Ascending aorta (tissue), 2 donors: ENCODE measurements at regions of chr3 and their contacts with region 1.

Region 1: DNA sequence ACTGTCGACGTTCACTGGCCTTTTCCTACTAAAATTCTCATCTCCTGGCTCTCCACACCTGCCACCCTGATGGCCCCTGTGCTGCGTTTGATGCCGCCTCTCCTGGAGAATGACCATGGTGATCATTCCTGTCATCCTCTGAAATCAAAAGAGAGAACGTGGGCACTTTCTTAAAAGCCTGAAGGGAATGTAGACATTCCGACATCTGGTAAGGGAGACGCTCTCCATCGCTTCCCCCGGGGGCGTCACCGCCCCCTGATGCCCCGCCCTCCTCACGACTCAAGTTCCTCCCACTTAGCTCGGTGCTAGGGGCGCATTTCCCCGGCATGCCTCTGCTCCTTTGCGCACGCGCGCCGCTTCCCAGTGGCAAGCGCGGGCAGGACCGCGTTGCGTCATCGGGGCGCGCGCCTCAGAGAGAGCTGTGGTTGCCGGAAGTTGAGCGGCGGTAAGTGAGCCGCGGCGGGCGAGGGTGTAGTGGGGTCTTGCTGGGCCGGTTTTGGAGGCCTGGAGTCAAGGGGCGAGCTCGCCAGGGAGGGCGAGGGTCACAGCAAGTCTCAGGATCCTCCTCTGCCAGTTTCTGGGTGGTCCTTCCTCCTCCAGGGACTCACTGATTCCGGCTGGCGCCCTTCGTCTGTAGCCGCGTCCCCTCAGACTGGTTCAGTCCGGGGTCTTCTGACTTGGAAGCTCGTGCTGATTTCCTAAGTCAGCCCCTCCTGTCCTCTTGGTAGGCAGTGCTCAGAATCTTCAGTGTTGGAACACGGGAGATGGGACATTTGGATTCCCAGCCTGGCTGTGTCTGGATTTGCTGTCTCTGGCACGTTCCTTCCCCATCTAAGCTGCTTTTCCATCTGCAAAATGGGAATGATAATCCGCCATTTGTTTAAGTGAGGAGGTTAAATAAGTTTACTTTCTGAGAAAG is at the start of gene ATG7:
- DNase-seq: peak; percentile 91 to 99
- H3K4me3 ChIP-seq: peak within 1 kb of the TSS; percentile 89 to 91
- H3K27ac ChIP-seq: peak within 1 kb of the TSS; percentile 74 to 85
- H3K4me1 ChIP-seq: peaks cover 8 to 14% of the 10 kb centered on the region in 2 donors
- H3K27me3 ChIP-seq: no peaks in the 10 kb centered on the region
- CTCF ChIP-seq: no peak
- total RNA-seq, gene ATG7: 48.5 TPM

Region 2: DNA sequence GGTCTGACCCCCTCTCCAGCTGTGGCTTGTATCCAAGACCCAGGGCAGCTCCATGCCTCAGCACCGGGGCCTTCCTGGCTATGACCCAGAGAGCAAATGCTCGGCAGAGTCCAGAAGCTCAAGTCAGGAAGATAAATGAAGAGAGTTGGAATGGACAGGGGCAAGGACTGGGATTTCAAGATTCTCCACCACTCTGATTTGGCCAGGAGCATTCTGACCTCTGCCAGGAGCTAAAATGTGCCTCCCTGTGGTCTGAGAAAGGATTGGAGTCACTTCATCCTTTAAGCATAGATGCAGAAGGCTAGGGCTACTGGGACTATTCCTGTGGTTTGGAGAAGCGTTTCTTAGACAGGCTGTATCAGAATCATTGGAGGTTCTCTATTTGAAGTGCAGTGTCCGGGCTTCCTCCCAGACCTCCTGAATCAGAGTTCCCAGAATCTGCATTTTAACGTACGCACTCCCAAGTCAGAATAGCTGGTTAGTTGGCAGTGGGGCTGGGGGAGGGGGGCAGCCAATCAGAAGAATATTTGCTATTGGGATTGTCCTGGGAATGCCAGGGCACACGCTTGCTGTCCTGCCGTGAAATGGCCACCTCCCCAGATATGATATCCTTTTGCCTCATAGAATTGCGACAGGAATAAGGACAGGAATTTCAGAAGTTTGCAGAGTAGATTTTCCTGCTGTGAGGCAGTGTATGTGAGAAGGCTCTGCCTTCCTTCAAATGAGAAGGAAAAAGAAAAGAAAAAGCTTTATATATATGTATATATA is 60.5 kb before region 1 on chr3:
- intact Hi-C with region 1: loop called (anchors 2 kb)
- DNase-seq: peak in 1 of 2 donors; percentile 71
- H3K4me3 ChIP-seq: peak overlapping the region in 1 of 2 donors; percentile 26
- H3K27ac ChIP-seq: peak overlapping the region; percentile 85 to 86
- H3K4me1 ChIP-seq: peaks cover 9 to 46% of the 10 kb centered on the region in 2 donors
- H3K27me3 ChIP-seq: no peaks in the 10 kb centered on the region
- CTCF ChIP-seq: peak in 1 of 3 experiments; percentile 38

Region 3: GRCh38 chr3:11288786-11289682 is 16.8 kb after region 1 on chr3:
- intact Hi-C with region 1: loop called (anchors 1 kb)
- DNase-seq: no peak
- H3K4me3 ChIP-seq: peak overlapping the region; percentile 17 to 29
- H3K27ac ChIP-seq: peak overlapping the region; percentile 86
- H3K4me1 ChIP-seq: peaks cover 19 to 25% of the 10 kb centered on the region in 2 donors
- H3K27me3 ChIP-seq: no peaks in the 10 kb centered on the region
- CTCF ChIP-seq: no peak